ENCODE measurements at regions of chr11 and their contacts with region 1.

Region 1: GRCh38 chr11:86919557-86920210 is 35.5 kb downstream of the FZD4 start:
- DNase-seq: peak; percentile 57 to 74
- ATAC-seq: peak; percentile 86 to 90; a peak in 5 of 6 replicates
- H3K4me3 ChIP-seq: no peak overlapping the region
- H3K27ac ChIP-seq: peak overlapping the region in 1 of 2 experiments; percentile 48; a peak in 3 of 6 replicates
- H3K4me1 ChIP-seq: peaks cover 22% of the 10 kb centered on the region
- CTCF ChIP-seq: peak; percentile 87
- EP300 ChIP-seq: no peak
- POLR2A ChIP-seq: no peak
- RAD21 ChIP-seq: peak; percentile 89 to 94

Region 2: DNA sequence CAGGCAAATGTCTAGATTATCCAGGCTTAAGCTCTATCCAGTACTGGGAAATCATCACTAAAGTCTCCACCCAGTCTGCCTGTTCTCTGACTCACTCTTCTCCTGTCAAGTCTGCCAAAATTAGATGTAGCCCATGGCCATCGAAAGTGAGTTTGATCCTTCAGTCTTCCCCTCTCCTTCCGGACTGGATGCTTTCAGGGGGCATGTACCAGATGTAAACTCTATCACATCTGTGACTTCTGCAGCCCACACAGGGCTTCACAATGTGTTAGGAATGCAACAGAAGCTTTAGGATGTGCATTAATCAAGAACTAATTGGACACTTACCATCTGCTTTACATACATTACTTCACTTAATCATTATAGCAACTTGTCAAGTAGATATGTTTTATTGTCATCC is 259.6 kb before region 1 on chr11:
- CTCF ChIA-PET with region 1: no interaction called
- POLR2A ChIA-PET with region 1: no interaction called
- DNase-seq: no peak
- ATAC-seq: peak; percentile 66 to 81; a peak in 5 of 6 replicates
- H3K4me3 ChIP-seq: no peak overlapping the region
- H3K27ac ChIP-seq: no peak overlapping the region
- H3K4me1 ChIP-seq: peaks cover 17% of the 10 kb centered on the region
- CTCF ChIP-seq: no peak
- EP300 ChIP-seq: no peak
- POLR2A ChIP-seq: no peak
- RAD21 ChIP-seq: no peak

Region 3: DNA sequence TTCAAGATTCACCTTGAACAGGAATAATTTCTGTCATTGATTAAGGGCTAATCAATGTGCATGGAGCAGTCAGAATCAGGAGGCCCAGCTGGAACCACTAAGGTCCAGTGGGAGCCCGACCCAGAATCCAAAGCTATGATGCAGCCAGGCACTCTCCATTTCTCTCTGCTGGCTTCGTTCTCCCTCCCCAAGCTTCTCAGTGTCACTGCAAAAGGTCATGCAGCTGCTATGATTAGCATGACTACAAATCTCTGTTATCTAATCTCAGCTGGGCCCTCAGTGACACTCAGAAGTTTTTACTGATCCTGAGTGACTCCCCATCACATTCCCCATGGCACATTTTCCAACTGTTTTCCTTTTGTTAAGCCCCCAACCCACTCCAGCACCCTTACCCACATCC is 150.5 kb before region 1 on chr11:
- CTCF ChIA-PET with region 1: no interaction called
- POLR2A ChIA-PET with region 1: no interaction called
- DNase-seq: no peak
- ATAC-seq: no peak
- H3K4me3 ChIP-seq: no peak overlapping the region
- H3K27ac ChIP-seq: peak overlapping the region in 1 of 2 experiments; percentile 39; a peak in 2 of 6 replicates
- H3K4me1 ChIP-seq: no peaks in the 10 kb centered on the region
- CTCF ChIP-seq: no peak
- EP300 ChIP-seq: no peak
- POLR2A ChIP-seq: no peak
- RAD21 ChIP-seq: no peak

Region 4: DNA sequence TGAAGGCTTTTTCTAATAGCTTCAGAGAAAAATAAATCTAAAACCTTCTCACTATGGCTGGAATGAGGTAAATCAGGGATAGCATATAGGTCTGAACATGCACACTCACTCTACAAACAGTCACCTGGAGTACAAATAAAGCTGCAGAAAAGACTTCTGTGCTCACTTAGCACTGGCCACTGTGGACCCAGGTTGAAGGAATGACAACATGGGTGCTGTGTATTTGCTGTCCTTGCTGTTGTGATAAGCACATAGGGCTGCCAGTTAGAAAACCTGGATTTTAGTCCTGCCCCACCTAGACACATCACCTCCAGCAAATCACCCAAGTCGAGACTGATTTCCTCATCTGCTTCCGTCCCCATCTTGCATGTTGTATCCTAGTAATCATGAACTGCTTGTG is 15.7 kb before region 1 on chr11:
- CTCF ChIA-PET with region 1: interaction called, 17 read pairs
- POLR2A ChIA-PET with region 1: no interaction called
- DNase-seq: no peak
- ATAC-seq: no peak
- H3K4me3 ChIP-seq: no peak overlapping the region
- H3K27ac ChIP-seq: no peak overlapping the region
- H3K4me1 ChIP-seq: no peaks in the 10 kb centered on the region
- CTCF ChIP-seq: no peak
- EP300 ChIP-seq: no peak
- POLR2A ChIP-seq: no peak
- RAD21 ChIP-seq: no peak

Region 5: GRCh38 chr11:86930957-86931547 is 11.4 kb after region 1 on chr11:
- CTCF ChIA-PET with region 1: interaction called, 11 read pairs
- POLR2A ChIA-PET with region 1: no interaction called
- DNase-seq: no peak
- ATAC-seq: no peak
- H3K4me3 ChIP-seq: no peak overlapping the region
- H3K27ac ChIP-seq: no peak overlapping the region
- H3K4me1 ChIP-seq: peaks cover 14% of the 10 kb centered on the region
- CTCF ChIP-seq: no peak
- EP300 ChIP-seq: no peak
- POLR2A ChIP-seq: no peak
- RAD21 ChIP-seq: no peak

Region 6: GRCh38 chr11:86947541-86947940 is 27.9 kb after region 1 on chr11:
- CTCF ChIA-PET with region 1: no interaction called
- POLR2A ChIA-PET with region 1: no interaction called
- DNase-seq: no peak
- ATAC-seq: no peak
- H3K4me3 ChIP-seq: no peak overlapping the region
- H3K27ac ChIP-seq: no peak overlapping the region
- H3K4me1 ChIP-seq: no peaks in the 10 kb centered on the region
- CTCF ChIP-seq: no peak
- EP300 ChIP-seq: no peak
- POLR2A ChIP-seq: no peak
- RAD21 ChIP-seq: no peak

Measured in A549 (cell line).